ENCODE measurements at regions of chr1 and their contacts with region 1.

Region 1: DNA sequence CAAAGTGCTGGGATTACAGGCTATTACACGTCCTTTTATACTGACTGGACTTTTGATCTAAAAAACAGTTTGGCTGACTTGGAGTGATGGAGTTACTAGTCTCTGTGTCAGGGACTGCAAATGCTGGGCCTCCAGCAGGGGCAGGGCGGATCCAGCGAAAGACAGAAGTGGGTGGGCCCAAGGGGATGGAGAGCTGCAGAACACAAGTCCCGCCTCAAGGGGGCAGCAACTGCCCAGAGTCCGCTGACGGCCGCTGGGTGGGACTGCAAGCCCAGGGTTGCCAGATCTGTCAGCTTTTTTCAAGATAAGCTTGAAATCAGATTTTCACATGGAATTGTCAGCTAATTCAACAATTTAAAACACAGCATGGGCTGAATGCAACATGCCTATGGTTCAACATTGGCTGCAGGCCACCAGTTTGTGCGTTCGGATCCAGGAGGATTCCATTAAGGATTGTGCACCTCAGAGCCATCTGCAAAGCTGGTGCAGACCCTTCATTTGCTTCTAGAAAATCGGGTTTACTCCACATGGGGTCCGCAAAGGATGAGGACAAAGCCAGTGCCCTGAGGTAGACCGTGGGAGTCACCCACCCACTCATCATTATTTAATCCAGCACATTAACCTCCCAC is 10.7 kb downstream of the STMN1 start:
- DNase-seq: peak; percentile 89 to 92 (median 91)
- H3K4me3 ChIP-seq: no peak overlapping the region
- H3K4me3 Mint-ChIP-seq: peak overlapping the region in 1 of 8 donors; percentile 23
- H3K27ac ChIP-seq: no peak overlapping the region
- H3K27ac Mint-ChIP-seq: peak overlapping the region in 6 of 7 donors; percentile 4 to 73 (median 58)
- H3K4me1 ChIP-seq: peaks cover 10% of the 10 kb centered on the region
- H3K4me1 Mint-ChIP-seq: peaks cover 4 to 9% (median 7%) of the 10 kb centered on the region in 4 donors
- H3K27me3 ChIP-seq: no peaks in the 10 kb centered on the region
- H3K27me3 Mint-ChIP-seq: no peaks in the 10 kb centered on the region

Region 2: DNA sequence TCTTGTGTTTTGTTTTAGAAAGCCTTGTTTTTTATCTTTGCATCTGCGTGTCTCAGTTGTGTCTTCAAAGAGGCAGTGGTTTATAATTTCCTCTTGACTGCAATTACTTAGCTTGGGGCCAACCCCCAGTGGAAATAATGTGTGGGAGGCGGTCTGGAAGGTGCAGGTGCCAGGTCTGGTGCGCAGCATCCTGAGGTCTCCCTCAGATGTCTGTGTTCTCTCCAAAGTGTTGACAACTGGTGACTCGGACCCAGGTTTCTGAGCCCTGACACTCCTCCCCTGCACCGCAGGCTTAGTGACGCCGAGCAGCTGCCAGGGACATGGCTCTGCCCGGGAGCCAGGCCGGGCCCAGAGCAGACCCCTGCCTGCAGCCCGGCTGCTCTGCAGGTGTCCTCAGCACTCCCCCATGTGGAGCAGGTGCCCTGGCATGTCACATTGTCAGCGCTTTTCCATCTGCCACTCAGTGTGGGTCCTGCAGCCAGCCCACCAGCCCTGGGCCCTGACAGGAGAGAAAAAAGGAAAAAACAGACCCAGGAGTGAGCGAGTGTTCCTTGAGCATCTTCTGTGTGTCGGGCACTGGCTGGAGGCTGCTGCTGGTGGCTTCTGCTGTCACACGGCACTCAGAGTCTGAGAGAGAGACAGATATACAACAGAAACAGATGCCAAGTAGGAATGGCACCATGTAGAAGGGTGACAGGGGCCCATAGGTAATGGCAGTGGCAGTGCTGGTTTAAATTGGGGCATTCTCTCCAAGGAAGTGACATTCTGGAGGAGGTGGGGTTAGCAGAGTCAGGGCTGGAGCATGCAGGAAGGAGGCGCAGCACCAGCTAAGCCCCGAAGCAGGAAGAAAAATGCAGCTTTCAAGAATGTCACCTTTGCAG is 120.3 kb before region 1 on chr1:
- CTCF ChIA-PET with region 1: no interaction called
- POLR2A ChIA-PET with region 1: no interaction called
- intact Hi-C with region 1: no loop called
- DNase-seq: peak; percentile 89 to 97 (median 91)
- H3K4me3 ChIP-seq: peak overlapping the region; percentile 8 to 47
- H3K4me3 Mint-ChIP-seq: peak overlapping the region; percentile 66 to 90 (median 82)
- H3K27ac ChIP-seq: peak overlapping the region; percentile 45
- H3K27ac Mint-ChIP-seq: peak overlapping the region; percentile 90 to 99 (median 93)
- H3K4me1 ChIP-seq: peaks cover 64% of the 10 kb centered on the region
- H3K4me1 Mint-ChIP-seq: peaks cover 48 to 73% (median 51%) of the 10 kb centered on the region in 4 donors
- H3K27me3 ChIP-seq: no peaks in the 10 kb centered on the region
- H3K27me3 Mint-ChIP-seq: no peaks in the 10 kb centered on the region

Region 3: GRCh38 chr1:25804244-25804963 is 91.1 kb before region 1 on chr1:
- CTCF ChIA-PET with region 1: no interaction called
- POLR2A ChIA-PET with region 1: no interaction called
- intact Hi-C with region 1: no loop called
- DNase-seq: no peak
- H3K4me3 ChIP-seq: no peak overlapping the region
- H3K4me3 Mint-ChIP-seq: peak overlapping the region in 1 of 8 donors; percentile 34
- H3K27ac ChIP-seq: no peak overlapping the region
- H3K27ac Mint-ChIP-seq: peak overlapping the region in 3 of 7 donors; percentile 23 to 30 (median 27)
- H3K4me1 ChIP-seq: peaks cover 42% of the 10 kb centered on the region
- H3K4me1 Mint-ChIP-seq: peaks cover 25 to 50% (median 37%) of the 10 kb centered on the region in 4 donors
- H3K27me3 ChIP-seq: no peaks in the 10 kb centered on the region
- H3K27me3 Mint-ChIP-seq: no peaks in the 10 kb centered on the region

Region 4: GRCh38 chr1:25905680-25906643 is 10.5 kb after region 1 on chr1 and contains the start of gene STMN1:
- CTCF ChIA-PET with region 1: interaction called, 63 read pairs
- POLR2A ChIA-PET with region 1: interaction called, 21 read pairs
- intact Hi-C with region 1: loop called (anchors 1 kb)
- DNase-seq: peak; percentile 74 to 88 (median 77)
- H3K4me3 ChIP-seq: peak within 1 kb of the TSS; percentile 71 to 93
- H3K4me3 Mint-ChIP-seq: peak within 1 kb of the TSS; percentile 89 to 96 (median 92)
- H3K27ac ChIP-seq: peak within 1 kb of the TSS; percentile 54
- H3K27ac Mint-ChIP-seq: peak within 1 kb of the TSS; percentile 87 to 98 (median 96)
- H3K4me1 ChIP-seq: peaks cover 26% of the 10 kb centered on the region
- H3K4me1 Mint-ChIP-seq: peaks cover 14 to 31% (median 21%) of the 10 kb centered on the region in 4 donors
- H3K27me3 ChIP-seq: no peaks in the 10 kb centered on the region
- H3K27me3 Mint-ChIP-seq: no peaks in the 10 kb centered on the region
- total RNA-seq, gene STMN1: 34.5 to 37.1 TPM

Region 5: DNA sequence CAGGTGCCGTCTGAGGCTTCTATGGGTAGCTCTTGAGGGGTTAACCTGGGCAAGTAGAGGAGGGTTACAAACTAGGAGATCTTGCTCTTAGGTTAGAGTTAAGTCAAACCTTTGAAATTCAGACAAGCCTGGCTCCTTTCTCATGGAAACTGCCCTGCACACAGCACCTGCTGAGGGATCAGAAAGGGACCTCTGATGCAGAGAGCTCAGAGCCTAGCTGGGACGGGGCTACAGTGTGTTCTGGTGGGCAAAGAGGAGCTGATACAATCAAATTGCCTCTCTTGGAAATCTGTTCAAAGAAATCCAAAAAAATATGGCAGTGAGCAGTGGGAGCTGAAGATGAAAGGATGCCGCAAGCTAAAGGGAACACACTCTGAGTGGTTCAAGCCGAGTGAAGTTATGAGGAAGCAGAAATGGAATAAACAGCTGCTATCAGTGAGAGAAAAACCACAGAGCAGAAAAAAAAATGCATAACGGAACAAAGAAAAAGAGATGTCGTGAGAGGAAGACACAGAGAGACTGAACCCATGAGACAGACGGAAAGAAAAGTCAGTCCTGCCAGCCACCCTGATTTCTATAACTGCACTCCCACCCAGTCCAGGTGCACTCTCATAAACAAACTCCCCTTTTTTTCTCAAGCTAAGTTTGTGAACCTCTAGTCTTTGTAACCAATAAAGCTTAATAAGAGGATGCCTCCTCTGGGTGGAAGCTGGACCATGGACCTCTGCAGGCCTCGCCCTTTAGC is 75.8 kb after region 1 on chr1:
- CTCF ChIA-PET with region 1: interaction called, 15 read pairs
- POLR2A ChIA-PET with region 1: interaction called, 17 read pairs
- intact Hi-C with region 1: loop called (anchors 1 kb)
- DNase-seq: peak; percentile 24 to 48 (median 40)
- H3K4me3 ChIP-seq: no peak overlapping the region
- H3K4me3 Mint-ChIP-seq: peak overlapping the region; percentile 14 to 77 (median 59)
- H3K27ac ChIP-seq: peak overlapping the region; percentile 50
- H3K27ac Mint-ChIP-seq: peak overlapping the region; percentile 49 to 90 (median 80)
- H3K4me1 ChIP-seq: peaks cover 13% of the 10 kb centered on the region
- H3K4me1 Mint-ChIP-seq: peaks cover 29 to 32% (median 31%) of the 10 kb centered on the region in 4 donors
- H3K27me3 ChIP-seq: no peaks in the 10 kb centered on the region
- H3K27me3 Mint-ChIP-seq: no peaks in the 10 kb centered on the region

Region 6: GRCh38 chr1:25997828-25998761 is 102.6 kb after region 1 on chr1 and contains the start of gene PAFAH2:
- CTCF ChIA-PET with region 1: interaction called, 583 read pairs
- POLR2A ChIA-PET with region 1: interaction called, 73 read pairs
- intact Hi-C with region 1: loop called (anchors 1 kb)
- DNase-seq: peak; percentile 95 to 99 (median 98)
- H3K4me3 ChIP-seq: peak within 1 kb of the TSS; percentile 67 to 86
- H3K4me3 Mint-ChIP-seq: peak within 1 kb of the TSS; percentile 92 to 96 (median 94)
- H3K27ac ChIP-seq: peak within 1 kb of the TSS; percentile 84
- H3K27ac Mint-ChIP-seq: peak within 1 kb of the TSS; percentile 97 to 99 (median 98)
- H3K4me1 ChIP-seq: peaks cover 29% of the 10 kb centered on the region
- H3K4me1 Mint-ChIP-seq: peaks cover 21 to 31% (median 28%) of the 10 kb centered on the region in 4 donors
- H3K27me3 ChIP-seq: no peaks in the 10 kb centered on the region
- H3K27me3 Mint-ChIP-seq: no peaks in the 10 kb centered on the region
- total RNA-seq, gene PAFAH2: 18.3 to 20.0 TPM

Region 7: GRCh38 chr1:26145041-26145959 is 249.8 kb after region 1 on chr1:
- CTCF ChIA-PET with region 1: interaction called, 7 read pairs
- POLR2A ChIA-PET with region 1: no interaction called
- intact Hi-C with region 1: loop called (anchors 5 kb)
- DNase-seq: peak; percentile 70 to 76 (median 72)
- H3K4me3 ChIP-seq: no peak overlapping the region
- H3K4me3 Mint-ChIP-seq: peak overlapping the region in 2 of 8 donors; percentile 58 to 66
- H3K27ac ChIP-seq: no peak overlapping the region
- H3K27ac Mint-ChIP-seq: peak overlapping the region in 2 of 7 donors; percentile 22 to 36
- H3K4me1 ChIP-seq: peaks cover 8% of the 10 kb centered on the region
- H3K4me1 Mint-ChIP-seq: peaks cover 4 to 7% (median 5%) of the 10 kb centered on the region in 4 donors
- H3K27me3 ChIP-seq: no peaks in the 10 kb centered on the region
- H3K27me3 Mint-ChIP-seq: peaks cover 6 to 8% of the 10 kb centered on the region in 2 donors